ENCODE measurements at regions of chr6 and their contacts with region 1.

Region 1: GRCh38 chr6:79777713-79778579 is 146.8 kb downstream of the SH3BGRL2 start:
- DNase-seq: peak; percentile 89
- ATAC-seq: peak; percentile 92

Region 2: GRCh38 chr6:78770766-78771165 is 1007.2 kb before region 1 on chr6:
- intact Hi-C with region 1: no loop called
- DNase-seq: no peak
- ATAC-seq: no peak

Region 3: DNA sequence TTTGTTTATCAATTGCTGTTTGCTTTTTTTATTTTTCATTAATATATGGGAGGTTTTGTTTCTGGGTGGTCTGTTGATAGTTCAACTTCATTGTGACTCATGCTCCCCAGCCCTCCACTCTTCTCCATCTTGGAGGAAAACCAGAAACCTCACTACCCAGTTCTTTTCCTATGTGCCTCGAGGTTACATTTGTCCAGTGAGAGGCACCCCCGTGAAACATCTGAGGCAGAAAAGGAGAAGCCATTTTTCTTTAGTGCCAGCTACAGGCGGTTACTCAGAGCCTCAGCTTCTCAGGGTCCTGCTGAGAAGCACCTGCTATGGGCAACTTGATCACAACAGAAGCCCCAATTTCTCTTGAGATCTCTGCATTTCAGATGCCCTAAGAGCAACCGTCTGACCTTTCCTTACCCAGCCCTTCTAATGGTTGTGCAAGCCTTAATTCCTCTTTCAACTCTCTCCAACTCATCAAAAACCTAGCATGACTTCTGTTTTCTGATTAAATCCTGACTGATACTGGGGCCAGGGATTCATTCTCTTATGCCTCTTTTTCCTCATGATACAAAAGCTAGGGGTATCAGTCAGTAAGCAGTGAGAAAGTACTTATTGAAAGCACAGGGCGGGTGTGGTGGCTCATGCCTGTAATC is 24.8 kb after region 1 on chr6:
- intact Hi-C with region 1: no loop called
- DNase-seq: no peak
- ATAC-seq: no peak

Region 4: GRCh38 chr6:79813854-79814709 is 36.1 kb after region 1 on chr6:
- intact Hi-C with region 1: loop called (anchors 5 kb)
- DNase-seq: no peak
- ATAC-seq: no peak

Region 5: DNA sequence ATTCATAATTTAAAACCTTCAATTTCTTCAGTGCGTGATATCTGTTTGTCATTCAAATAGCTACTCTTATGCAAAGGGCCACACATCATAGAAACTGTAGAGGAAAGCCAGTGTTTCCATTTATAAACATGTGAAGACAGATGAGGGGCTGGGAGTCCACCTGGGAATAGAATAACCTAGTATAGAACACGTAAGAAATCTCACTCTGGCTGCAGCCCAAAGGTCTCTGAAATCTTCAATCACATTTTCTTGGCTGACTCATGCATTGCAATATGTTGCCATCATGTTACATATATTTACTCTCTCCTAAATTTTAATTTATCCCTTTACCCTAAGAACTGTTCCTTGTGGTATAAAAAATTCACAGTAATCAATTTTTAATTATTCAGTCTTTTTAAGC is 46.3 kb after region 1 on chr6:
- intact Hi-C with region 1: no loop called
- DNase-seq: no peak
- ATAC-seq: no peak

Region 6: GRCh38 chr6:79869600-79870084 is 91.7 kb after region 1 on chr6:
- intact Hi-C with region 1: loop called (anchors 2 kb)
- DNase-seq: peak; percentile 90
- ATAC-seq: peak; percentile 97

Region 7: DNA sequence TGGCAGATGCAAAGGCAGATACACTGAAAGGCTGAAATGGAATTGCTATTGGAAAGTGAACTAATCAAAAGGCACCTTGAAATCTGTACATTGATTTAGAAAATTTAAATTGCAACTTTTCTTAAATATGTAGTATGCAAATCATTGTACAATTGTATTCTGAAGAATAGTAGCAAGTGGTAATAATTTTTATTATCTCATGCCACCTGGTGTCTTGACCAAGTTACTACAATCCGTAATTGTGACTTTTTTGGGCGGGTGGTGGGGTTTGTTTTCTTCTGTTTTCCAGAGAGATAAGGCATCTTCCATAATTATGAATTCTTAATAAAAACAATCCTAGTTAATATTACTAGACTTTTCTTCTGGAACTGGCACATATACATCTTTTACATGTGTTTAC is 316.1 kb after region 1 on chr6:
- intact Hi-C with region 1: loop called (anchors 5 kb)
- DNase-seq: no peak
- ATAC-seq: no peak

Measured in Right ventricle myocardium inferior (tissue), 1 donor.